Lower leg skin (tissue), 4 donors: ENCODE measurements at regions of chr11 and their contacts with region 1.

Region 1: GRCh38 chr11:94647926-94648325 is 80.8 kb downstream of the PIWIL4 start:
- DNase-seq: no peak
- H3K4me3 ChIP-seq: no peak overlapping the region
- CTCF ChIP-seq: no peak
- POLR2A ChIP-seq: no peak

Region 2: DNA sequence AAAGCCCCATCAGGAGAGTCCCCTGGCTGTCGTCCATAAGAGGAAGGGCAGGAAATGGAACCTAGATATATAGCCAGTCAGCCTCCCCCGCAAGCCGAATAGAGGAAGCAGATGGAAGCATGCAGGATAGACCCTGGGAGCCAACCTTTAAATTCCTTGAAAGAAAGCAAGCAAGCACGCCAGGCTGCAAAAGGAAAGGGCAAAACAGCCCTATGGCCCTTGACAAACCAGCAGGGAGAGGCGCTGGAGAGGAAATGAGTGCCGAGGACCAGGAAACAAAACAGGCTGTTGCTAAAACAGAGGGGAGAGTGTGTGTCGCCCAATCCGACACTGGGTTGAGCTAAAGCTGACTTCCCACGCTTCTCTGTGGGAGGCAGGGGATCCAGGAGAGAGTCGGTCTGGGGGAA is 1882.0 kb before region 1 on chr11:
- intact Hi-C with region 1: no loop called
- DNase-seq: no peak
- H3K4me3 ChIP-seq: no peak overlapping the region
- CTCF ChIP-seq: no peak
- POLR2A ChIP-seq: no peak

Region 3: DNA sequence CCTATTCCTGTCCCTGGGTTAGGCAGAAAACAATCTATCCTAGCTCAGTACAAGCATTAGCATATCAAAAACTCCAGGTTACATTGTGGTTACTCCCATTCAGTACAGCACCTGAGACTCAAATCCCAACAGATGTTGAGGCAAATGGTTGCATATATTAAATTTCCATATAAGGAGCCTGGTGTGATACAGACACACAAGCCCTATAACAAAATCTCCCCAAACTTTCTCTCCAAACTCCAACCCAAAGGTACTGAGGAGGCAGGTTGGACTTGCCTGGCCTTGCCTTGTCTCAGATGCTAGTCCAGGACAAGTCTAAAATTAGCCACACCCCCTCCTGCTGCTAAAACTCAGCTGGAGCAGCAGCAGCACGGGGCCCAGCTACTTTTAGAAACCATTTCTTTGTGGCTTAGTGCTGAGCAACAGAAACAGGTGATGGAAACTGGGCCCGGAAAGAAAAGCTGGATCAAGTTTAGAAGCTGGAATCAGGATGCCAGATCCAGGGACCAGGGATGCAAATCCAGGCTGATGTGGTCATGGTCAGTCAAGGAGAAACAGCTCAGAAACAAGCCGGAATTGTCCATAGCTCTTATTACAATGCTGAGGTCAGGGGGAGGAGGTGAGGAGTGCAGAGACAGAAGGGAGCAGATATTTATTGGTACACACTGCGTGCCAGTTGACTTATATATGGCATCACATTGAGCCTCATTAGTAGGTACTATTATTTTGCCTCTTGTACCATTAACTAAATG is 46.6 kb after region 1 on chr11:
- intact Hi-C with region 1: loop called (anchors 1 kb)
- DNase-seq: no peak
- H3K4me3 ChIP-seq: no peak overlapping the region
- CTCF ChIP-seq: no peak
- POLR2A ChIP-seq: no peak